Esophagus muscularis mucosa (tissue), 4 donors: ENCODE measurements at regions of chr17 and their contacts with region 1.

Region 1: GRCh38 chr17:77140166-77140878 is 447 bp upstream of the SEC14L1 start:
- DNase-seq: peak; percentile 100
- H3K4me3 ChIP-seq: peak overlapping the region; percentile 90 to 99 (median 97)
- H3K27ac ChIP-seq: peak overlapping the region; percentile 92 to 96 (median 96)
- H3K4me1 ChIP-seq: peaks cover 12 to 50% (median 35%) of the 10 kb centered on the region in 4 donors
- H3K27me3 ChIP-seq: no peaks in the 10 kb centered on the region
- CTCF ChIP-seq: peak in 1 of 3 experiments; percentile 3
- EP300 ChIP-seq: no peak
- POLR2A ChIP-seq: peak; percentile 89

Region 2: GRCh38 chr17:77068915-77069314 is 71.4 kb before region 1 on chr17:
- intact Hi-C with region 1: no loop called
- DNase-seq: no peak
- H3K4me3 ChIP-seq: no peak overlapping the region
- H3K27ac ChIP-seq: no peak overlapping the region
- H3K4me1 ChIP-seq: no peaks in the 10 kb centered on the region
- H3K27me3 ChIP-seq: peaks cover 0 to 74% (median 3%) of the 10 kb centered on the region in 4 donors
- CTCF ChIP-seq: no peak
- EP300 ChIP-seq: no peak
- POLR2A ChIP-seq: no peak

Region 3: GRCh38 chr17:77096570-77097214 is 43.6 kb before region 1 on chr17:
- intact Hi-C with region 1: loop called (anchors 2 kb)
- DNase-seq: no peak
- H3K4me3 ChIP-seq: peak overlapping the region in 1 of 4 donors; percentile 3
- H3K27ac ChIP-seq: peak overlapping the region; percentile 72 to 81 (median 77)
- H3K4me1 ChIP-seq: peaks cover 32 to 59% (median 52%) of the 10 kb centered on the region in 4 donors
- H3K27me3 ChIP-seq: no peaks in the 10 kb centered on the region
- CTCF ChIP-seq: peak; percentile 75 to 80 (median 80)
- EP300 ChIP-seq: no peak
- POLR2A ChIP-seq: no peak

Region 4: DNA sequence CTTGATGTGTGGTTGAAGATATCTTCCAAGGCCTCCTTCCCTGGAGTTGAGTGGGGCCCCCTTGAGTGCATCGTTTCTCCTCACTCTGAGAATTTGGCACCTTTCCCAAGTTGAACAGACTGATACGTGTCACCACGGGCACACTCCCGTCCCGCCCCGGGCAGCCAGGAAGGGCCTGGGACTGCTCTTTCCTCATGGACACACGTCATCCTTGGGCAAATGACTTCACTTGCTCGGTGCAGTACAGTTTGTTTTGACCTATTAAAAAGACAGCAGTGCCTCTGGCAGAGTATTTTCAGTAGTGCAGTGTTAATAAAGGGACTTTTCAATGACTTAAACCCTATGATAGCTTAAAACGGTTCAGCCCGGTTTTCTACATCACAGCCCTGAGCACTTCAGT is 60.4 kb after region 1 on chr17:
- intact Hi-C with region 1: no loop called
- DNase-seq: no peak
- H3K4me3 ChIP-seq: no peak overlapping the region
- H3K27ac ChIP-seq: no peak overlapping the region
- H3K4me1 ChIP-seq: peaks cover 0 to 4% (median 0%) of the 10 kb centered on the region in 4 donors
- H3K27me3 ChIP-seq: no peaks in the 10 kb centered on the region
- CTCF ChIP-seq: no peak
- EP300 ChIP-seq: no peak
- POLR2A ChIP-seq: no peak